ENCODE measurements at regions of chr11 and their contacts with region 1.

Region 1: GRCh38 chr11:10653926-10654810 is 39.4 kb downstream of the IRAG1 start:
- DNase-seq: peak in 22 of 35 experiments; percentile 3 to 75 (median 16)
- ATAC-seq: peak; percentile 61 to 73 (median 72)
- H3K4me3 ChIP-seq: no peak overlapping the region
- H3K4me3 Mint-ChIP-seq: no peak overlapping the region
- H3K27ac ChIP-seq: no peak overlapping the region
- H3K27ac Mint-ChIP-seq: no peak overlapping the region
- H3K4me1 ChIP-seq: peaks cover 0 to 5% of the 10 kb centered on the region in 2 experiments
- H3K4me1 Mint-ChIP-seq: peaks cover 0 to 8% (median 2%) of the 10 kb centered on the region in 3 donors
- H3K27me3 ChIP-seq: no peaks in the 10 kb centered on the region
- H3K27me3 Mint-ChIP-seq: no peaks in the 10 kb centered on the region

Region 2: GRCh38 chr11:10405855-10406592 is 248.1 kb before region 1 on chr11:
- CTCF ChIA-PET with region 1: interaction called, 16 to 27 read pairs
- POLR2A ChIA-PET with region 1: no interaction called
- DNase-seq: peak in 24 of 35 experiments; percentile 8 to 72 (median 20)
- ATAC-seq: peak; percentile 48 to 81 (median 80)
- H3K4me3 ChIP-seq: no peak overlapping the region
- H3K4me3 Mint-ChIP-seq: no peak overlapping the region
- H3K27ac ChIP-seq: no peak overlapping the region
- H3K27ac Mint-ChIP-seq: no peak overlapping the region
- H3K4me1 ChIP-seq: peaks cover 5 to 16% of the 10 kb centered on the region in 2 experiments
- H3K4me1 Mint-ChIP-seq: peaks cover 16 to 29% (median 18%) of the 10 kb centered on the region in 3 donors
- H3K27me3 ChIP-seq: peaks cover 0 to 3% of the 10 kb centered on the region in 2 experiments
- H3K27me3 Mint-ChIP-seq: no peaks in the 10 kb centered on the region

Region 3: DNA sequence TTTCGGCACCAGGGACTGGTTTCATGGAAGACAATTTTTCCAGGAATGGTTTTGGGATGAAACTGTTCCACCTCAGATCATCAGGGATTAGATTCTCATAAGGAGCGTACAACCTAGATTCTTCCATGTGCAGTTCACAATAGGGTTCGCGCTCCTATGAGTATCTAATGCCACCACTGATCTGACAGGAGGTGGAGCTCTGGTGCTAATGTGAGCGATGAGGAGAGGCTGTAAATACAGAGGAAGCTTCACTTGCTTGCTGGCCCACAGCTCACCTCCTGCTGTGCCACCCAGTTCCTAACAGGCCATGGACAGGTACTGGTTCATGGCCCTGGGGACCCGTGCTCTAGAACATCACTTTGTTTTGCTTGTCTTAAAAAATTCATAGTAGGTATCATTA is 240.9 kb before region 1 on chr11:
- CTCF ChIA-PET with region 1: interaction called, 16 to 32 read pairs
- POLR2A ChIA-PET with region 1: no interaction called
- DNase-seq: peak in 33 of 35 experiments; percentile 14 to 73 (median 36)
- ATAC-seq: peak; percentile 78 to 86 (median 80)
- H3K4me3 ChIP-seq: no peak overlapping the region
- H3K4me3 Mint-ChIP-seq: no peak overlapping the region
- H3K27ac ChIP-seq: no peak overlapping the region
- H3K27ac Mint-ChIP-seq: no peak overlapping the region
- H3K4me1 ChIP-seq: peaks cover 15 to 32% of the 10 kb centered on the region in 2 experiments
- H3K4me1 Mint-ChIP-seq: peaks cover 36 to 48% (median 47%) of the 10 kb centered on the region in 3 donors
- H3K27me3 ChIP-seq: no peaks in the 10 kb centered on the region
- H3K27me3 Mint-ChIP-seq: no peaks in the 10 kb centered on the region

Region 4: DNA sequence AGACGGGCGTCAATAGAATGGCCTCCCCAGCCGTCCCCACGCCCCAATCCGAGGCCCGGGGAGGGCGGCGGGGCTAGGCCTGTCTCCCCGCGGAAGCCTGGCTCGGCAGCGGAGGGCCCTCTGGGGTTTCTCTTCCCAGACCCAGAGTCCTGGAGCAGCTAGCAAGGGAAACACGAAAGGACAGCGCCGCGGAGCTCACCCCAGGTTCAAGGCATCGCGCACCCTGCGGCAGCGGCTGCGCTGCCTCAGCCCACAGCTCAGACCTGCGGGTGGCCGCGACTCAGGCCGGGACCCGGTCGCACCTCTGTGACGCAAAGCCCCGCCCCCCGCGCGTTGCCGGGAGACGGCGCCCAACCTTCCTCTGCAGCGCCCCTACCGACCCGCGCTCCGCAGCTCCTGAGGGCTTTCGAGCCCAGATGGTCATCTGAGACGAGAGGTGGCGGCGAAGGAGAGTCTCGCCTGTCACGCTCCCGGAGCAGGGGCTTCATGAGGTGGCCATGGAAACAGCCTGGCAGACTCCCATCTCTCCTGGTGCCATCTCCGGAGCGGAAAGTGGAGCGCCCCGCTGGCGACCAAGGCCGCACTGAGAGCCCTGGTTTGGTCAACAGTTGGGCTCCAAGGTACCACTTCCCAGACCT is 113.1 kb before region 1 on chr11 and contains the start of gene RNF141:
- CTCF ChIA-PET with region 1: interaction called in 1 of 2 experiments, 11 read pairs
- POLR2A ChIA-PET with region 1: no interaction called
- DNase-seq: peak; percentile 81 to 98 (median 92)
- ATAC-seq: peak; percentile 97 to 99 (median 98)
- H3K4me3 ChIP-seq: peak within 1 kb of the TSS; percentile 82 to 86
- H3K4me3 Mint-ChIP-seq: peak within 1 kb of the TSS; percentile 87 to 91 (median 87)
- H3K27ac ChIP-seq: peak within 1 kb of the TSS; percentile 78
- H3K27ac Mint-ChIP-seq: peak within 1 kb of the TSS; percentile 75 to 86
- H3K4me1 ChIP-seq: peaks cover 2 to 12% of the 10 kb centered on the region in 2 experiments
- H3K4me1 Mint-ChIP-seq: peaks cover 22 to 37% (median 30%) of the 10 kb centered on the region in 3 donors
- H3K27me3 ChIP-seq: peaks cover 0 to 13% of the 10 kb centered on the region in 2 experiments
- H3K27me3 Mint-ChIP-seq: no peaks in the 10 kb centered on the region
- total RNA-seq, gene RNF141: 15.1 to 17.3 (median 15.3) TPM

Region 5: GRCh38 chr11:10581481-10582019 is 72.6 kb before region 1 on chr11:
- CTCF ChIA-PET with region 1: no interaction called
- POLR2A ChIA-PET with region 1: no interaction called
- DNase-seq: peak in 9 of 35 experiments; percentile 1 to 36 (median 4)
- ATAC-seq: no peak
- H3K4me3 ChIP-seq: no peak overlapping the region
- H3K4me3 Mint-ChIP-seq: no peak overlapping the region
- H3K27ac ChIP-seq: no peak overlapping the region
- H3K27ac Mint-ChIP-seq: no peak overlapping the region
- H3K4me1 ChIP-seq: no peaks in the 10 kb centered on the region
- H3K4me1 Mint-ChIP-seq: no peaks in the 10 kb centered on the region
- H3K27me3 ChIP-seq: peaks cover 0 to 9% of the 10 kb centered on the region in 2 experiments
- H3K27me3 Mint-ChIP-seq: peaks cover 10 to 11% of the 10 kb centered on the region in 2 donors

Region 6: DNA sequence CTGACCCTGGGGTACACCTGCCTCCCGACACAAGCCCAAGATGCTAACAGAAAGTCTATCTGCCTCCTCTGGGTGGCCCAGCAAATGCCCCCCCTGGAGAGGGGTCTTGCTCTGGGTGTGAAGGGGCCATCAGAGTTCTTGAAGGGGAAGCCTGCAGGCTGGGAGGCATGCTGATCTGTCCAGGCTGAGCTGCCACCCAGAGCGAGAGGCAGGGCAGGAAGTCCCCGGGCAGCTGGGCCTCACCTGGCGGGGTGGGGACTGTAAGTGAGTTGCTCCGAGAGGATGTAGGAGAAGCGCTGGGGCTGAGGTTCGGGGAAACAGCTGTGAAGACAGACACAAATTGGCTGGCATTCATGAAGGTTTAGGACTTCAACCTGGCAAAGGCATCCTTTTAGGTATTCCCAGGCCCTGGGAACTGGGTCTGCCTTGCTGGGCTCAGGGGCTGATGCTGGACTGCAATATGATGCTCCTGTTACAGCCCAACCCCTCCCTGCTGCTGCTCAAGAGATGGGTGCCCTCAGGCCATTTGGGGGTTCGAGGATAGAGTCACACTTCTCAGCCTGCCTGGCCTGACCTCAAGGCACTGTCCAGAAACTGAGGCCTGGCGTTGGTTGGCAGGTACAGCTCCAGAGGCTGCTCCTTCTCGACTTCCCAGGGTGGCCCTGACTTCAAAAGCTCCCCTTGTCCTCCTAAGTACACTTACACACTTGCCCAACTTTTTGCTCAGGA is 25.5 kb before region 1 on chr11:
- CTCF ChIA-PET with region 1: no interaction called
- POLR2A ChIA-PET with region 1: no interaction called
- DNase-seq: peak in 27 of 35 experiments; percentile 3 to 52 (median 32)
- ATAC-seq: peak; percentile 67 to 92 (median 78)
- H3K4me3 ChIP-seq: no peak overlapping the region
- H3K4me3 Mint-ChIP-seq: no peak overlapping the region
- H3K27ac ChIP-seq: no peak overlapping the region
- H3K27ac Mint-ChIP-seq: no peak overlapping the region
- H3K4me1 ChIP-seq: peaks cover 20 to 26% of the 10 kb centered on the region in 2 experiments
- H3K4me1 Mint-ChIP-seq: peaks cover 15 to 21% (median 19%) of the 10 kb centered on the region in 3 donors
- H3K27me3 ChIP-seq: peaks cover 0 to 9% of the 10 kb centered on the region in 2 experiments
- H3K27me3 Mint-ChIP-seq: peaks cover 0 to 1% of the 10 kb centered on the region in 2 donors

Measured in T-cell (primary cell).